Activated CD4-positive, alpha-beta T cell treated with anti-CD3 and anti-CD28 coated beads for 36 hours (primary cell): ENCODE measurements at regions of chr5 and their contacts with region 1.

Region 1: GRCh38 chr5:87383216-87383615 is 29.5 kb downstream of the CCNH start:
- DNase-seq: no peak
- ATAC-seq: no peak
- H3K4me3 Mint-ChIP-seq: no peak overlapping the region
- H3K27ac Mint-ChIP-seq: no peak overlapping the region
- H3K4me1 Mint-ChIP-seq: no peaks in the 10 kb centered on the region
- H3K27me3 Mint-ChIP-seq: no peaks in the 10 kb centered on the region

Region 2: GRCh38 chr5:87394411-87395165 is 11.4 kb after region 1 on chr5:
- CTCF ChIA-PET with region 1: interaction called, 17 read pairs
- POLR2A ChIA-PET with region 1: interaction called, 3 read pairs
- intact Hi-C with region 1: loop called in 1 of 2 experiments (anchors 2 kb)
- DNase-seq: no peak
- ATAC-seq: no peak
- H3K4me3 Mint-ChIP-seq: no peak overlapping the region
- H3K27ac Mint-ChIP-seq: no peak overlapping the region
- H3K4me1 Mint-ChIP-seq: peaks cover 16% of the 10 kb centered on the region
- H3K27me3 Mint-ChIP-seq: no peaks in the 10 kb centered on the region

Region 3: DNA sequence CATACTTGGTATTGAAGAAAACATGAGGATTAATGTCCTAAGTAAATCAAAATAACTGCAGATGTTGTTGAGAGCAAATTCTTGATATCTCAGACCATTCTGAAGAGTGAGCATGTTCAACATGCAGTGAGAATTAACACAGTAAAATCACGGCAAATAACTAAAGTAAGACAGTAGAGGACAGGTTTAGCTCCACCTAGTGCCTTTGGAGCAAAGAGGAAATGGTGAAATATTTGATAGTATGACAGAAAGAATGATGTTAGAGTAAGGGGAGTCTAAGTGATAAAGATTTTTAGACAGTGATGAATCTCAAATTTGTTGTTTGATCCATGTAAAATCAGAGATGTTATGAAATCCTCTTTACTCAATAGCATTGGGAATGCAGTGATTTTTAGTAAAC is 461.2 kb after region 1 on chr5:
- CTCF ChIA-PET with region 1: no interaction called
- POLR2A ChIA-PET with region 1: no interaction called
- intact Hi-C with region 1: no loop called
- DNase-seq: no peak
- ATAC-seq: no peak
- H3K4me3 Mint-ChIP-seq: no peak overlapping the region
- H3K27ac Mint-ChIP-seq: no peak overlapping the region
- H3K4me1 Mint-ChIP-seq: no peaks in the 10 kb centered on the region
- H3K27me3 Mint-ChIP-seq: no peaks in the 10 kb centered on the region